WTC11 (cell line): ENCODE measurements at regions of chr2 and their contacts with region 1.

Region 1: DNA sequence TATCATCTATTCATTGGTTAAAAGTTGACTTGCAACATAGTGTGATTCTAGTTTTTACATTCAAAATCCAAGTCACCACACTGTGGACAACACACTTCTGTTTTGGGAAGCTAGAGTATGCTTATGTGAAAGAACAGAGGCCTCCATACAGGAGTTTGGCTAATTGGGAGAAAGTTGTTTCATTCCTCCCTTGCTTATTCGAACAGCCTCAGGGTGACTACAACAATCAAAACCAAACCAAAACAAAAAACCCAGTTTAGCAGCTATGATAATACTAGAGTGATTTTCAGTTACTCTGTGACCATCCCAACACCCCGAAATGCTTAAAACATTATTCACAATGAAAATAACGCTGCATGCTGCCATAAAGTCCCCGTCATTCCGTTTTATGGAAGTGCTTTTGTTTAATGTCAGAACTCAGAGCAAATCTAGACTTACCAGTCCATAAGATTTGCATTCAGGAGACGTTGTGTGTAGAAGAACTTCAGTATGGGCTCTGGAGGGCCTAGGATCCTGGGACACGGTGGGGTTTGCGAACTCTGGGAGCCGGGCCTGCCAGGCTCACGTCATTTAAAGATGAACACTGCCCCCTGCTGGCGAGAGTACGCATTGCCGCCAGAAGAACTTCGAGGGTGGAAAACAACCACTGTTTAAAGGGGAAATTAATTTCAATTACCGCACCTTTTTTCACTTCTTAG is 111.4 kb downstream of the FTCDNL1 start:
- DNase-seq: peak; percentile 86
- ATAC-seq: peak; percentile 70
- H3K4me3 Mint-ChIP-seq: no peak overlapping the region
- H3K27ac Mint-ChIP-seq: 0 out of 2 replicates have a peak overlapping the region, but pooled peaks have one; percentile 19
- H3K4me1 Mint-ChIP-seq: peaks cover 65% of the 10 kb centered on the region
- H3K27me3 Mint-ChIP-seq: no peaks in the 10 kb centered on the region
- CTCF ChIP-seq: peak; percentile 96

Region 2: DNA sequence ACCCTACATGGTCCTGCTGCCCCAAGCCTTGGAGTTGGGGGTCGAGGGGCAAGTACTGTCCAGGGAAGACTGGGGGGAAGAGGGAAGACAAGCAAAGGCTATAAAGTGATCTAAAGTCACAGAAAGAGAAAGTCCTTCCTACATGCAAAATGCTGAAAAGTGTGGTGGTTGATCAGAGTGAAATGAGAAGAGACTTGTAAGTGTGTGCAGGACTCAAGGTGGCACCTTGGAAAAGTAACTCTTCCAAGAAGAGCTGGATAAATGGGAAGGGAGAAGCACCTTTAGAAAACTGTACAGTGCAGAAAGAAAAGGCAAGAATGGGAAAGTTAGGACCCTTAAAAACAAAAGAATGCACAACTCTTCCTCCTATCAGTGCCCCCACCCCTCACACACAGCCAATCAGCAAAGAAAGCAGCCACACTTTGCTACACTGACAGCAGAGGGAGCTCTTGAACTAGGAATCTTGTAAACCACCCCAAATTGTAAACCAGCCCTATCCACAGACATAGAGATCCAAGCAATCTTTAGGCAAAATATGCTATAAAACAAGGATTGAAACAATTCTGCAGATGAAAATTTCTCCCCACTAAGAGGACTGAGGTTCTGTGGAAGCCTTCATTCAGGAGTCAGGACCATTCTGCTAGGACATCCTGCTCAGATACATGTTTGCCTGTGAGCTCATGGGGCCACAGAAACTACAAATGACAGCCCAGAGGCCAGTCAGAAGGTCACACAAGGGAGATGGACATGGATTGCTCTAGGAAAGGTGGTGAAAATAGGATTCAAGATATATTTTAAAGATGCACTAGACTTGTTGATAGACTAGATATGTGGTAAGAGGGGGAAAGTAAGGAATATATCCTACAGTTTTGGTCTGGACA is 35.0 kb before region 1 on chr2:
- CTCF ChIA-PET with region 1: interaction called, 22 read pairs
- POLR2A ChIA-PET with region 1: interaction called, 7 read pairs
- DNase-seq: peak; percentile 57
- ATAC-seq: peak; percentile 99
- H3K4me3 Mint-ChIP-seq: no peak overlapping the region
- H3K27ac Mint-ChIP-seq: no peak overlapping the region
- H3K4me1 Mint-ChIP-seq: no peaks in the 10 kb centered on the region
- H3K27me3 Mint-ChIP-seq: no peaks in the 10 kb centered on the region; the same call in 1 of the 2 replicates
- CTCF ChIP-seq: peak; percentile 70

Region 3: GRCh38 chr2:199751472-199752120 is 12.0 kb after region 1 on chr2:
- CTCF ChIA-PET with region 1: interaction called, 12 read pairs
- POLR2A ChIA-PET with region 1: no interaction called
- DNase-seq: no peak
- ATAC-seq: peak; percentile 87
- H3K4me3 Mint-ChIP-seq: no peak overlapping the region
- H3K27ac Mint-ChIP-seq: no peak overlapping the region
- H3K4me1 Mint-ChIP-seq: peaks cover 20% of the 10 kb centered on the region
- H3K27me3 Mint-ChIP-seq: no peaks in the 10 kb centered on the region
- CTCF ChIP-seq: no peak

Region 4: DNA sequence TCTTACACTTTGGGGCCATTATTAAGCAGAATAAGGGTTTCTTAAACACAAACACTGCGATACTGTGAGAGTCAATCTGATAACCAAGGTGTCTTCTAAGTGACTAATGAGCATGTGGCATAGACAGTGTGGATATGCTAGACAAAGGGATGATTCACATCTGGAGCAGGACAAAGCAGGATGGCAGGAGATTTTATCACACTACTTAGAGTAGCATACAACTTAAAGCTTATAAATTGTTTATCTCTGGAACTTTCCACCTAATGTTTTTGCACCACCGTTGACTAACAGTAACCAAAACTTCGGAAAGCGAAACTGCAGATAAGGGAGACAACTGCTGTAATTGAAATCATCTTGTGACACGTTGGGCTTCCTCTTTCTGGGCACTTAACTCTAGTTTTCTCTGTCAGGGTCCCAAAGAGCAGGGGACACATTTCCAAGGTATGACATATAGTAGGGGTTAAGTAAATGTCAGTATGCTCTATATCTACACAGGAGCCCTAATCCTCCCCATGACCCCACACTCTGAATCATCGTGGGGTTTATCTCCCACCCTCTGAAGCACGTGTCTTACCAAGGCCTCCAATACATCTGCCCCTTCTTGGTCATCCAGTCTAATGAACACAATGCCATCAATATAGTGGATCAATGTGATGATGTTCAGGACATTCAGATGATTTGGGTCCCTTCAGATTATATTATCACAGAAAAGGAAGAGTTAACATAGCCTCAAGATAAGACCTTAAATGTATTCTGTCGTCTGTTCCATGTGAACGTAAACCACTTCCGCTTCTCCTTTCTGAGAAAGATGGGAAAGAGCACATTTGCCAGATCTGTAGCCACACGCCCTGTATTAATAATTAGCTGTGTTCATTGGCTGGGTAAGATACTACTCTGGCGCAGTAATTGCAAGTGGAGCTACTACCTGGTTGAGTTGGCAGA is 32.7 kb after region 1 on chr2:
- CTCF ChIA-PET with region 1: no interaction called
- POLR2A ChIA-PET with region 1: no interaction called
- DNase-seq: no peak
- ATAC-seq: no peak
- H3K4me3 Mint-ChIP-seq: no peak overlapping the region
- H3K27ac Mint-ChIP-seq: no peak overlapping the region
- H3K4me1 Mint-ChIP-seq: no peaks in the 10 kb centered on the region
- H3K27me3 Mint-ChIP-seq: peaks cover 7% of the 10 kb centered on the region; the same call in 1 of the 2 replicates
- CTCF ChIP-seq: no peak